Breast epithelium (tissue), 4 donors: ENCODE measurements at regions of chr1 and their contacts with region 1.

Region 1: GRCh38 chr1:35564037-35564883 is 6.7 kb downstream of the NCDN start:
- DNase-seq: peak; percentile 60 to 81
- H3K4me3 ChIP-seq: no peak overlapping the region
- H3K27ac ChIP-seq: no peak overlapping the region
- H3K4me1 ChIP-seq: peaks cover 0 to 5% of the 10 kb centered on the region in 2 donors
- H3K27me3 ChIP-seq: no peaks in the 10 kb centered on the region
- CTCF ChIP-seq: peak; percentile 34 to 68 (median 57)
- POLR2A ChIP-seq: no peak

Region 2: GRCh38 chr1:33616773-33617172 is 1947.5 kb before region 1 on chr1:
- intact Hi-C with region 1: no loop called
- DNase-seq: no peak
- H3K4me3 ChIP-seq: no peak overlapping the region
- H3K27ac ChIP-seq: no peak overlapping the region
- H3K4me1 ChIP-seq: no peaks in the 10 kb centered on the region
- H3K27me3 ChIP-seq: peaks cover 0 to 17% of the 10 kb centered on the region in 2 donors
- CTCF ChIP-seq: no peak
- POLR2A ChIP-seq: no peak

Region 3: GRCh38 chr1:35448344-35448801 is 115.9 kb before region 1 on chr1:
- intact Hi-C with region 1: loop called (anchors 10 kb)
- DNase-seq: no peak
- H3K4me3 ChIP-seq: no peak overlapping the region
- H3K27ac ChIP-seq: peak overlapping the region in 1 of 2 donors; percentile 74
- H3K4me1 ChIP-seq: peaks cover 12 to 20% of the 10 kb centered on the region in 2 donors
- H3K27me3 ChIP-seq: no peaks in the 10 kb centered on the region
- CTCF ChIP-seq: no peak
- POLR2A ChIP-seq: no peak

Region 4: GRCh38 chr1:35622510-35623178 is 58.4 kb after region 1 on chr1:
- intact Hi-C with region 1: no loop called
- DNase-seq: no peak
- H3K4me3 ChIP-seq: no peak overlapping the region
- H3K27ac ChIP-seq: no peak overlapping the region
- H3K4me1 ChIP-seq: no peaks in the 10 kb centered on the region
- H3K27me3 ChIP-seq: no peaks in the 10 kb centered on the region
- CTCF ChIP-seq: no peak
- POLR2A ChIP-seq: no peak